Esophagus squamous epithelium (tissue), 5 donors: ENCODE measurements at regions of chr12 and their contacts with region 1.

Region 1: GRCh38 chr12:121701667-121702277 is 10.8 kb upstream of the TMEM120B start:
- DNase-seq: no peak
- H3K4me3 ChIP-seq: no peak overlapping the region
- H3K27ac ChIP-seq: no peak overlapping the region
- H3K4me1 ChIP-seq: peaks cover 0 to 4% (median 0%) of the 10 kb centered on the region in 3 donors
- H3K27me3 ChIP-seq: no peaks in the 10 kb centered on the region
- CTCF ChIP-seq: no peak
- POLR2A ChIP-seq: no peak

Region 2: GRCh38 chr12:121773011-121773777 is 71.4 kb after region 1 on chr12:
- intact Hi-C with region 1: loop called (anchors 5 kb)
- DNase-seq: no peak
- H3K4me3 ChIP-seq: no peak overlapping the region
- H3K27ac ChIP-seq: peak overlapping the region in 3 of 4 donors; percentile 6 to 50 (median 25)
- H3K4me1 ChIP-seq: peaks cover 10 to 31% (median 10%) of the 10 kb centered on the region in 3 donors
- H3K27me3 ChIP-seq: no peaks in the 10 kb centered on the region
- CTCF ChIP-seq: peak; percentile 79 to 92 (median 88)
- POLR2A ChIP-seq: no peak